ENCODE measurements at regions of chr11 and their contacts with region 1.

Region 1: DNA sequence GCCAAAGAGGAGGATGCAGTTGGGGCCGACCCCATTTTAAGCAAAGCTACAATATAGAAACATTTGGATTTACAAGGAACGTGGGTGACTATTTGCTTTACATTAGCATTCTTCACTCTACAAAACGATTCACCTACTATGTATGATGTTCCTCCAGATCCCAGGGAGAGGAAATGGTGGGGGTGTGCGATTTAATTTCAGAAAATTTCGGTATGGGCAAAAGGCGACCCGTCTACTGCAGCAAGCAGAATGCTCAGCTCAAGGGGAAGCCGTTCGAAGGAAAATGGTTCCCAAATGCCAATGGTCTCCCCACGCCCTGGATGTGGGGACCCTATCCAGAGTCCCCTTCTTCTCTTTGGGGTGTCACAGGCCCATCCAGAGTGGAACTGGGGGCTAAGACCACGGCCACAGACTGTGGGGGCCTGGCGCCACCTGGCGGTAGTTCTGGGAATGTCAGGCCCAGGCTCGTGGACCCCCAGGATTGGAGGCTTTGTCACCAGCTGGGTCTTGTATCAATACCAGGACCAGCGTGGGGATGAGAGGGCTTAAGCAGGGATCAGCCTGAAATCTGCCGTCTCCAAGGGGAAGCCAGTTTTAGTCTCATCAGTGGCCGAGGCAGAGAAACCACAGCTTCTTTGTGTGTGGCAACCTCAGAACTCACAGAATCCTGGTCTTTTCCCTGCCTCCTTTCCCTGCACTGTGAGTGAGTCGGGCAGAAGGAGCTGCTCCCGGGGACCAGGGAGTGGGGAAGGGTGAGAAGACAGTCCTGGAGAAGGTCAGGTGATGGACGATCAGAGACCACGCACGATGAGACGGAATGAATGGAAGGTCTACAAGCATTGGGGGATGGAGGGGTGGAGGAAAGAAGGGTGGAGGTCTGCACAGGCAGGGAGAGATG is 8.4 kb downstream of the LRRC10B start:
- H3K4me3 ChIP-seq: no peak overlapping the region
- H3K27ac ChIP-seq: no peak overlapping the region
- H3K4me1 ChIP-seq: no peaks in the 10 kb centered on the region
- CTCF ChIP-seq: peak; percentile 80

Region 2: DNA sequence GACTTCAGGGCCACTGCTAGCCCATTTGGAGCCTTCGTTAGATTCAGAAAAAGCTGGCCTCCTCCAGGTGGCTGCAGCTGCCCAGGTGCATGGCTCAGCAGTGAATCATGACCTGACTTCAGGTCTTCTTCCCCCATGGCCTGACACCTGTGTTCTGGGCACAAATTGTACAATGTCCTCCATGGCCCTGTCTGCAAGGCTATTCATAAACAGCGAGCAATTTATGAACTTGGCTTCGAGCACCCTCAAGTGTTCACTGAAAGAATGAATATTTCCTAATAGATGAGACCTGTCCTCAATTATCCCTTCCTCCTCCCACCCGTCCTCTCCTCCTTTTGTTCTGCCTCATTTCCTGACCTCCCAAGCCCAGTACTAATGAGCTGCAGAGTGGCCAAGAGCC is 343.5 kb before region 1 on chr11:
- CTCF ChIA-PET with region 1: no interaction called
- POLR2A ChIA-PET with region 1: no interaction called
- H3K4me3 ChIP-seq: no peak overlapping the region
- H3K27ac ChIP-seq: no peak overlapping the region
- H3K4me1 ChIP-seq: no peaks in the 10 kb centered on the region
- CTCF ChIP-seq: no peak

Region 3: GRCh38 chr11:61429691-61430582 is 87.0 kb before region 1 on chr11 and contains the starts of genes CPSF7 and SDHAF2:
- CTCF ChIA-PET with region 1: interaction called, 12 read pairs
- POLR2A ChIA-PET with region 1: no interaction called
- H3K4me3 ChIP-seq: peak within 1 kb of the TSS; percentile 99
- H3K27ac ChIP-seq: peak within 1 kb of the TSS; percentile 99
- H3K4me1 ChIP-seq: no peaks in the 10 kb centered on the region
- CTCF ChIP-seq: peak; percentile 49

Region 4: GRCh38 chr11:61484516-61484915 is 32.4 kb before region 1 on chr11:
- CTCF ChIA-PET with region 1: interaction called, 325 read pairs
- POLR2A ChIA-PET with region 1: no interaction called
- H3K4me3 ChIP-seq: no peak overlapping the region
- H3K27ac ChIP-seq: no peak overlapping the region
- H3K4me1 ChIP-seq: no peaks in the 10 kb centered on the region
- CTCF ChIP-seq: no peak

Region 5: GRCh38 chr11:61526956-61527731 is 10.2 kb after region 1 on chr11:
- CTCF ChIA-PET with region 1: interaction called, 27 read pairs
- POLR2A ChIA-PET with region 1: interaction called, 10 read pairs
- H3K4me3 ChIP-seq: no peak overlapping the region
- H3K27ac ChIP-seq: no peak overlapping the region
- H3K4me1 ChIP-seq: no peaks in the 10 kb centered on the region
- CTCF ChIP-seq: no peak

Region 6: GRCh38 chr11:61541598-61541997 is 24.7 kb after region 1 on chr11:
- CTCF ChIA-PET with region 1: interaction called, 13 read pairs
- POLR2A ChIA-PET with region 1: no interaction called
- H3K4me3 ChIP-seq: no peak overlapping the region
- H3K27ac ChIP-seq: no peak overlapping the region
- H3K4me1 ChIP-seq: no peaks in the 10 kb centered on the region
- CTCF ChIP-seq: no peak